GM12878 (cell line): ENCODE measurements at regions of chr17 and their contacts with region 1.

Region 1: GRCh38 chr17:2244545-2245525 is 58.8 kb downstream of the SMG6 start:
- DNase-seq: no peak
- ATAC-seq: peak; percentile 88
- H3K4me3 ChIP-seq: no peak overlapping the region
- H3K27ac ChIP-seq: peak overlapping the region; percentile 84
- H3K4me1 ChIP-seq: peaks cover 25% of the 10 kb centered on the region
- H3K27me3 ChIP-seq: no peaks in the 10 kb centered on the region
- CTCF ChIP-seq: peak; percentile 97 to 98 (median 98); a peak in 5 of 6 replicates
- EP300 ChIP-seq: no peak
- POLR2A ChIP-seq: no peak
- RAD21 ChIP-seq: peak; percentile 100

Region 2: GRCh38 chr17:2054512-2055291 is 190.1 kb before region 1 on chr17 and contains the start of gene HIC1:
- CTCF ChIA-PET with region 1: interaction called, 265 read pairs
- POLR2A ChIA-PET with region 1: interaction called, 61 read pairs
- RAD21 ChIA-PET with region 1: interaction called, 271 read pairs
- SMC1A ChIA-PET with region 1: interaction called, 141 read pairs
- in situ Hi-C with region 1: no loop called
- intact Hi-C with region 1: loop called (anchors 1 kb)
- DNase-seq: no peak
- ATAC-seq: peak; percentile 70
- H3K4me3 ChIP-seq: peak within 1 kb of the TSS; percentile 95
- H3K27ac ChIP-seq: peak within 1 kb of the TSS; percentile 84
- H3K4me1 ChIP-seq: peaks cover 14% of the 10 kb centered on the region
- H3K27me3 ChIP-seq: peaks cover 2% of the 10 kb centered on the region in 2 experiments; a peak in 3 of 4 replicates
- CTCF ChIP-seq: peak; percentile 74 to 96 (median 88); a peak in 5 of 6 replicates
- EP300 ChIP-seq: 0 out of 4 replicates have a peak, but pooled peaks of 1 of the 2 experiments have one; percentile 8
- POLR2A ChIP-seq: peak; percentile 94
- RAD21 ChIP-seq: peak; percentile 87
- polyA plus RNA-seq, gene HIC1: 0.11 to 0.57 TPM

Region 3: DNA sequence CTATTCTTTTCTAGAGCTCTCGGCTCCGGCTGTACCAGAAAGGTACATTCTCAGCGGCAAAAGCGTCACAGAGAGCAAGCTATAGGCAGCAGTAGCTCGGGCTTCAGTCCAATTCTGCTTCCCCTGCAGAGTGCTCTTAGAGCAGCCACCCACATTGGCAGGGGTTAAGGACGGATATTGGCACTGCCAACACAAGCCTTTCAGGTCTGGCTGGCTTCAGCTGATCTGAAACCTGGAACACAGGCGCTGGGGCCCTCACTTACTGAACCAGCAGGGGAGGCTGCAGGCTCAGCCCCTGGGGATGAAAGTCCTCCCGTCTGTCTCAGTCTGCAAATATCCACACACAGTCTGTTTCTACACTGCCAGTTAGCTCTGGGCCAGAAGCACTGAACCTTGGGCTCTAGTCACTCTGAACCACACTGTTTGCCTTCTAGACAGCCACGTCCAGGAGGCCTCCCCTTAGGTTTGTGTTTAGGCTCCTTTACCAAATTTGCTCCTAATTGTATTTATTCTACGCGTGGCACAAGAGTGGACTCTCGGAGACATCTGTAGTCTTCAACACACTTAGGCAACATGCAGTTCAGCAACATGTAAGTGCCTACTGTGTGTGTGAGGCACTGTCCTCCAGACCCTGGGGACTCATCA is 149.8 kb before region 1 on chr17:
- CTCF ChIA-PET with region 1: interaction called, 126 read pairs
- POLR2A ChIA-PET with region 1: interaction called, 20 read pairs
- RAD21 ChIA-PET with region 1: interaction called, 55 read pairs
- SMC1A ChIA-PET with region 1: interaction called, 39 read pairs
- in situ Hi-C with region 1: no loop called
- intact Hi-C with region 1: no loop called
- DNase-seq: no peak
- ATAC-seq: peak; percentile 43
- H3K4me3 ChIP-seq: no peak overlapping the region
- H3K27ac ChIP-seq: no peak overlapping the region
- H3K4me1 ChIP-seq: peaks cover 26% of the 10 kb centered on the region
- H3K27me3 ChIP-seq: no peaks in the 10 kb centered on the region
- CTCF ChIP-seq: peak; percentile 36 to 68 (median 58); a peak in 5 of 6 replicates
- EP300 ChIP-seq: no peak
- POLR2A ChIP-seq: no peak
- RAD21 ChIP-seq: peak; percentile 79

Region 4: GRCh38 chr17:2172077-2172851 is 72.6 kb before region 1 on chr17:
- CTCF ChIA-PET with region 1: interaction called, 26 read pairs
- POLR2A ChIA-PET with region 1: interaction called, 4 read pairs
- RAD21 ChIA-PET with region 1: interaction called, 13 read pairs
- SMC1A ChIA-PET with region 1: interaction called, 17 read pairs
- in situ Hi-C with region 1: no loop called
- intact Hi-C with region 1: no loop called
- DNase-seq: no peak
- ATAC-seq: no peak
- H3K4me3 ChIP-seq: no peak overlapping the region
- H3K27ac ChIP-seq: no peak overlapping the region
- H3K4me1 ChIP-seq: peaks cover 2% of the 10 kb centered on the region; the same call in 1 of the 2 replicates
- H3K27me3 ChIP-seq: no peaks in the 10 kb centered on the region
- CTCF ChIP-seq: no peak
- EP300 ChIP-seq: no peak
- POLR2A ChIP-seq: no peak
- RAD21 ChIP-seq: no peak

Region 5: GRCh38 chr17:2222901-2223616 is 21.8 kb before region 1 on chr17:
- CTCF ChIA-PET with region 1: interaction called, 35 read pairs
- POLR2A ChIA-PET with region 1: interaction called, 20 read pairs
- RAD21 ChIA-PET with region 1: interaction called, 49 read pairs
- SMC1A ChIA-PET with region 1: interaction called, 49 read pairs
- in situ Hi-C with region 1: no loop called
- intact Hi-C with region 1: no loop called
- DNase-seq: peak; percentile 81
- ATAC-seq: peak; percentile 95
- H3K4me3 ChIP-seq: peak overlapping the region; percentile 29; the same call in 1 of the 2 replicates
- H3K27ac ChIP-seq: peak overlapping the region; percentile 87
- H3K4me1 ChIP-seq: peaks cover 30% of the 10 kb centered on the region
- H3K27me3 ChIP-seq: no peaks in the 10 kb centered on the region
- CTCF ChIP-seq: no peak
- EP300 ChIP-seq: peak; percentile 69 to 88
- POLR2A ChIP-seq: peak; percentile 13; the same call in 1 of the 2 replicates
- RAD21 ChIP-seq: 0 out of 2 replicates have a peak, but pooled peaks have one; percentile 8

Region 6: DNA sequence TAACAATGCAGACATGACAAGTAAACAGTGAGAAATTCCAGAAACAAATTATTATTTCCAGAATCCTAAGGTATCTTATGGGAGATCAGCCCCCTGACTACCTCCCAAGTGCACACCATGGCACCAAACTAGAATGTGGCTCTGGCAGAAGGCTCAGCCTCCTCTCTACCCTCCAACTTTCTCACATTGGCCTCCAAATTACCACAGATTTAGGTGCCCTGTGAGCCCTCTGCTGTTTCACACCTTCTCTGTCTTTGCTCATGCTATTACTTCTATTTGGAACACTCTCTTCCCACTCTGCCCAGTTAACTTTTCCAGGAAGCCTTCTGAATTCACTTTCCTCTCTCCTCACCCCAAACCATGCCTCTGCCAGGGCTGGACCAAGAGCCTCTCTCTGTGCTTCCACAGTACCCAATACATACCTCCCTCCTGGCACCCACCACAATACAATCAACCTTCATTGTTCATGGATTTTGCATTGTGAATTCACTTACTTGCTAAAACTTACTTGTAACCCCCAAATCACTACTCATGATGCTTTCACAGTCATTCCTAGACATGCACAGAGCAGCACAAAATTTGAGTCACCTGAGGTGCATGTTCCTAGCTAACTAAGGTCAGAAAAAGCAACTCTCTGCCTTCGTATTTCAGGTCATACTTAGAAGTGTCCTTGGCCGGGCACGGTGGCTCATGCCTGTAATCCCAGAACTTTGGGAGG is 27.3 kb after region 1 on chr17:
- CTCF ChIA-PET with region 1: interaction called, 20 read pairs
- POLR2A ChIA-PET with region 1: interaction called, 25 read pairs
- RAD21 ChIA-PET with region 1: interaction called, 52 read pairs
- SMC1A ChIA-PET with region 1: interaction called, 149 read pairs
- in situ Hi-C with region 1: no loop called
- intact Hi-C with region 1: no loop called
- DNase-seq: no peak
- ATAC-seq: no peak
- H3K4me3 ChIP-seq: no peak overlapping the region
- H3K27ac ChIP-seq: no peak overlapping the region
- H3K4me1 ChIP-seq: peaks cover 11% of the 10 kb centered on the region
- H3K27me3 ChIP-seq: no peaks in the 10 kb centered on the region
- CTCF ChIP-seq: no peak
- EP300 ChIP-seq: no peak
- POLR2A ChIP-seq: no peak
- RAD21 ChIP-seq: no peak